ENCODE measurements at regions of chr19 and their contacts with region 1.

Region 1: DNA sequence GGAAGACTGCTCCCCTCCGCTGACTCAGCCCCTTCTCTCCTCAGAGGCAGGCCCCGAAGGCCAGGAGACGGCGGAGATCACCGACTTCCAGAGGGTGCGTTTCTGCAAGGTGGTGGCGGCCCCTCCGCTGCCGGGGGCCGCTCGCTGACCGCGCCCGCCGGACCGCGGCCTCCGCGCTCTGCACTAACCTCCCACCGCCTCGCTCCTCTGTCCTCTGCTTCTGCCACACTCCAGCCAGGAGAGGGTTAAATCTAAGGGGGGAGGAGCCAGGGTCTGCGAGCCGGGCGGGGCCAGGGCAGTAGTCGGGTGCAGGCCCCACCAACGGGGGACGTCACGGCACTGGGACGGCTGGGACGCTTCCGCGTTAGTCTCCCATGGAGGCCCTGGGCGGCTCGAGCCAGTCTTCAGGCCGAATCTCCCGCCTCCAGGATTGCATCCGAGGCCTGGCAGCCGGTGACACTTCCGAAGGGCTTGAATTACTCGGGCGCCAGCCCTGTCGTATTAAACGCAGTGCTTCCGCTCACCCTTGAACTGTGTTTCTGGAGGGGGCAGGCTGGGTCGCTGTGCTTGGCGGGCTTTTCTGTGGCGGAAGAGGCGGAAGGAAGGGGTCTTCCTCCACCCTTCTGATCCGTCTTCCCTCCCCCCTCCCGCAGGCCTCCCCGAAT is 1.2 kb upstream of the INAFM1 start:
- DNase-seq: peak; percentile 90
- H3K4me3 Mint-ChIP-seq: peak overlapping the region; percentile 92
- H3K27ac Mint-ChIP-seq: peak overlapping the region; percentile 98
- H3K4me1 Mint-ChIP-seq: peaks cover 29% of the 10 kb centered on the region
- H3K27me3 Mint-ChIP-seq: no peaks in the 10 kb centered on the region

Region 2: DNA sequence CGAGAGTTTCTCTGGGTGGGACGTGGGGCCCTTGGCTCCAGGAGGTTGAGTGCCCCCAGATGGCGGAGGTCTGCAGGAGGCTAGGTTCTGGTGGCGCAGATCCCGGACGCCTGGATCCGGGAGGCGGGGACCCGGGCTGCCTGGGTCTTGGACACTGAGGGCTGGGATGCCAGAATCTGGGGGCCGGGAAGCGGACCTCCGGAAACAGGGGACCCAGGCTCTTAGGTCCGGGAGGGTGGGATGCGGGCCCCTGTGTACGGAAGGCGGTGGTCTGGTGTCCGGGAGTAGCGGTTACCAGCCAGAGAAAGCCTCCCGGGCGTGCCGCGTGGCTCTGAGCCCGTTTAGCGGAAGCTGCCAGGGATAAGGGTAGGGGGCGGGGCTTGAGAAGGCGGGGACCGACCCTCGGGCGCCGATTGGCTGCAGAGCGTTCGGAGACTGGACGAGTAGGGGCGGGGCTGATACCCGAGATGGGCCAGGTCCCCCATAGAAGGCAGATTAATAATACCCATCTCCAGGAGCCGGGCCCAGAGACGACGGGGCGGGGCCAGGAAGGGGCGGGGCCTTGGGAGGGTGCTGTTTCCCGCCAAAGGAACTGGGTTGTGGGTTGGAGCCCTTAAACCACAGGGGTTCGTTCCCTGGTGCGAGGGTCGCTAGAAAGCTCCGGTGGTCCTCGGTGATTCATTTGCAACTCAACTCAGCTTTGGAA is 485.0 kb before region 1 on chr19 and contains the start of gene SLC1A5:
- intact Hi-C with region 1: loop called (anchors 1 kb)
- DNase-seq: peak; percentile 95
- H3K4me3 Mint-ChIP-seq: peak within 1 kb of the TSS; percentile 95
- H3K27ac Mint-ChIP-seq: peak within 1 kb of the TSS; percentile 92
- H3K4me1 Mint-ChIP-seq: peaks cover 57% of the 10 kb centered on the region
- H3K27me3 Mint-ChIP-seq: peaks cover 2% of the 10 kb centered on the region
- total RNA-seq, gene SLC1A5: 264 and 267 TPM in 2 replicates

Region 3: DNA sequence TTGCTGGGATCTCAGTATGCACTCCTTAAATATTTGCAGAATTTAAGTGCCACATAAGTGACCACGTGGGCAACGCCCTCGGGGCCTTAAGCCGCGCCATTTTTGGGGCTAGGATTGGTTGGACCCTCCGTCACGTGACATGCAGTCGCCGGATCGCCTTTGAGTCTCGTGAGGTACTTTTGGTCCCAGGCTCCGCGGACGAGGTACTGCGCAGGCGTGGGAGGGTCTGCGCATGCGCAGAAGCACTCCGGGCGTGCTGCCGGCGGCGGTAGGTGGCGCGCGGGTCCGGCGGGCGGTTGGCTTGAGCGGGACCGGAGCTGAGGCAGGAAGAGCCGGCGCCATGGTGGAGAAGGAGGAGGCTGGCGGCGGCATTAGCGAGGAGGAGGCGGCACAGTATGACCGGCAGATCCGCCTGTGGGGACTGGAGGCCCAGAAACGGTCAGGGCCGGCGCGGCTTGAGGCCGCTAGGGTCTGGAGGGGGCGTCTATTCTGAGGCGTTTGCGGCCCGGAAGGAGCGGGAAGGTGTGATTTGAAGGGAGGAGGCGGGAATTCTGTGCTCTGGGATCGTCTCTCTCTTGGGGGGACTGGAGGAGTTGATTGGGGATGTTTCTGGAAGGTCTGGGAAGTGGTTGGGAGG is 142.7 kb before region 1 on chr19 and contains the start of gene SAE1:
- intact Hi-C with region 1: loop called (anchors 1 kb)
- DNase-seq: peak; percentile 93
- H3K4me3 Mint-ChIP-seq: peak within 1 kb of the TSS; percentile 100
- H3K27ac Mint-ChIP-seq: peak within 1 kb of the TSS; percentile 97
- H3K4me1 Mint-ChIP-seq: peaks cover 56% of the 10 kb centered on the region
- H3K27me3 Mint-ChIP-seq: peaks cover 4% of the 10 kb centered on the region
- total RNA-seq, gene SAE1: 141 and 142 TPM in 2 replicates

Region 4: DNA sequence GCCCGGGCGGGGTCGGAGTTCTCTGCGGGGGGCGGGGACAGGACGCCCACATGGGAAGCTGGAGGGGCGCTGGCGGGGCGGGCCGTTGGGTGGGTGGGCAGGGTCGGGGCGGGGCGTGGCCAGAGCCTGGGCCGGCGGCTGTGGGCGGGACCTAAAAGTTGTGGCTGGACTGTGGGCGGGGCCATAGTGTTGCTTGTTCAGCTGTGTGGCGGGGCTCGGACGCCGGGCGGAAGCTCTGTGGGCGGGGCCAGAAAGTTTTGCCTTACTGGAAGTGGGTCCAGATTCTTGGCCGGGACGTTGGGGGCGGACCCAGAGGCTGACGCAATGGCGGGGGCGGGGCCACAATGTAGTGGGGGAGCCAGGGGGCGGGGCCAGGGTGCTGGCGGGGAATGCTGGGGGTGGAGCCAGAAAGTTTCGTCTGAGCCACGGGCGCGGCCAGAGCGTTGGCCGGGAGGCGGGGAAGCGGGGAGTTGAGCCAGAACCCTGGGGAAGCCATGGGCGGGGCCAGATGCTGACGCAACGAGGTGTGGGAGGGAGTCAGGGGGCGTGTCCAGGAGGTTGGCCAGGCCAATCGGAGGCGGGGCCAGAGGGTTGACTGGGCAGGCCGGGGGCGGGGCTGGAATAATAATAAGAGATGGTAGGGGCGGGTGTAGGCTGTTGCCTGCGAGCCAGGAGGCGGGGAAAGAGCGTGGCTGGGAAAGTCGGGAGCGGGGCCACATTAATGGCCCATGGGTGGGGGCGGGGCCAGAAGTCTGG is 16.6 kb before region 1 on chr19:
- intact Hi-C with region 1: loop called (anchors 1 kb)
- DNase-seq: peak; percentile 99
- H3K4me3 Mint-ChIP-seq: peak overlapping the region; percentile 86
- H3K27ac Mint-ChIP-seq: peak overlapping the region; percentile 95
- H3K4me1 Mint-ChIP-seq: peaks cover 31% of the 10 kb centered on the region
- H3K27me3 Mint-ChIP-seq: peaks cover 2% of the 10 kb centered on the region

Region 5: DNA sequence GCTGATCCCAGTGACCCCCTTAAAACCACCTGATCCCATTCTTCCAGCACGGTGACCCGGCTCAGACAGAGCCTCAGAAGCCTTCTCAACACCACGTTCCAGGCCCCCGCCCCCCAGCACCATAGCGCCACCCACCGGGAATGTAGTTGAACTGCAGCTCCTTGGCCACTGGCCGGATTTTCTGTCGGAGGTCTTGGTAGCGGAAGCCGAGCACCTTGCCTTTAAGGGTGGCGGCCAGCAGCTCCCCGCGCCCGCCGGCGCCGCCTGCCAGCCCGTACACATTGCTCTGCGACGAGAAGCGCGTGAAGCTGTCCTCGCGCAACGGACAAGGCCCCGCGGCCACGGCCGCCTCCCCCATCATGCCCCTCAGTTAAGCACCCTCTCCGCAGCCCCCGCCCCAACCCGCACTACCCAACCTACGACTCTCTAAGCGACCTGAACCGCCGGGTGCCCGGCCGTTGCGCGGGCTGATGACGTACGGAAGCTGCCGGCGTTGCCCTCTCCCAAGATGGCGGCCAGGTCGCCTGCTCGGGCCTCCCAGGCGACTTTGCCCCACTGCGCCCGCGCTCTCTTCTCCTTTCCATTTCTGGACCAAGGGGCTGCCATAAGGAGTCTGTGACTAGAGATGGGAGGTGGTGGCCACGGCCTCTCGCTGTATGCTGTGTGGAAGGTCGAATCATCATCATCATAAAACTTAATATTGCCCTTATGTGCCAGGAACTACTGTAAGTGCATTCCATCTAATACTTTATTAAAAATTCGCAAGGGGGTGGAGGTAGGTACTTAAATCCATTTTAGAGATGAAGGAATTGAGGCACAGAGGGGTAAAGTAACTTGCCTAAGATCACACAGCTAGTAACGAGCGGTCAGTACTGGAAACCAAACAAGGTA is 210.6 kb after region 1 on chr19 and contains the start of gene KPTN:
- intact Hi-C with region 1: loop called (anchors 5 kb)
- DNase-seq: peak; percentile 86
- H3K4me3 Mint-ChIP-seq: peak within 1 kb of the TSS; percentile 99
- H3K27ac Mint-ChIP-seq: peak within 1 kb of the TSS; percentile 99
- H3K4me1 Mint-ChIP-seq: peaks cover 23% of the 10 kb centered on the region
- H3K27me3 Mint-ChIP-seq: peaks cover 4% of the 10 kb centered on the region
- total RNA-seq, gene KPTN: 9.6 and 10.8 TPM in 2 replicates

Region 6: GRCh38 chr19:47608074-47608918 is 334.9 kb after region 1 on chr19:
- intact Hi-C with region 1: loop called (anchors 1 kb)
- DNase-seq: peak; percentile 97
- H3K4me3 Mint-ChIP-seq: peak overlapping the region; percentile 87
- H3K27ac Mint-ChIP-seq: peak overlapping the region; percentile 62
- H3K4me1 Mint-ChIP-seq: peaks cover 23% of the 10 kb centered on the region
- H3K27me3 Mint-ChIP-seq: no peaks in the 10 kb centered on the region